ENCODE measurements at regions of chr7 and their contacts with region 1.

Region 1: DNA sequence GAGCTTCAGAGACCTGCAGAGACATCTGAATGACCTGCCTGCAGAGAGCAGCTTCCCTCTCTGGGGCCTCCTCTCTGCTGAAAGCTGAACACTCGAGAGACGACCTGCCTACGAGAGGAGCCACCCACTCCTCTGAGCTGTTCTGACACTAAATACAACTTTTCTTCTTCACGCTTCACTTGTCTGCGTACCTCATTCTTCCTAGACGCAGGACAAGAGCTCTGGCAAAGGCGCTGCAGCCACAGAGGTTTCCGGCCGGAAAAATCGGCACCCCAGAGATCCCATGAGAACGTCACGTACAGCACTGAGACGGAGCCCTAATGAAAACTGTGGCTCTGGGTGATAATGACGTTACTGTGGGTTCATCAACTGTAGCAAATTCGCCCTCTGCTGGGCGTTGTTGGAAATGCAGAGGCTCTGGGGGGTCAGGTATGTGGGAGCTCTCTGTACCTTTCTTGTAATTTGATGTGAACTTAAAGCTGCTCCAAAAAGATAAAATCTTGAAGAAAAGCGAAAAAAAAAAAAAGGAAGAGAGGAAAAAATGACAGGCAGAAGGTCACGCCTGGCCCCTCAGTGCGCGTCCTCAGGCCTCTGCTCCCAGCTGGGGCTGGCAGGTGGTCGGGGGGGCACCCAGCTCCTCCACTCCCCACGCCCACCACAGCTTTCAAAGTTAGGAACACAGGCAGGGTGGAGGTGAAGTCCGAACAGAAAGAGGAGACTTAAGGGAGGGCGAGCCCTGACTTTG is 120.7 kb downstream of the DYNC2I1 start:
- DNase-seq: peak; percentile 30
- H3K4me3 ChIP-seq: peak overlapping the region; percentile 41
- H3K27ac ChIP-seq: no peak overlapping the region
- H3K27me3 ChIP-seq: no peaks in the 10 kb centered on the region
- CTCF ChIP-seq: peak; percentile 86

Region 2: DNA sequence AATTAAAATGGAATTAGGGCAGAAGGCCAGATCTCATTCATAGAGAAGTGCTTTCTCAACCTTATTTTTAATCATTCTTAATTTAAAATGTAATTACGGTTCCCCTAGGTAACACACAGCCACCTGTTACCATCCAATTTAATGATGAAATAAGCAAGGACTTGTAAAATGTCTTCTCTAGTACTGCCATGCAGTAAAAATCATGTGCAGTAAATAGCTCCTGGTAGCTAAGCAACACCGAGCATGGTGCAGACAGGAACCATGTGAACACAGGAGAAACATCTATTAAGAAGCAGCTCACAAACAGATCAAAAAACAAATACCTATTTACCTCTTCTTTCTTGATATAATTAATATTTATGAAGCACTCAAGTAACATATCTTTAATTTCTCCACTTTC is 287.5 kb before region 1 on chr7:
- CTCF ChIA-PET with region 1: interaction called, 73 read pairs
- POLR2A ChIA-PET with region 1: no interaction called
- DNase-seq: no peak
- H3K4me3 ChIP-seq: no peak overlapping the region
- H3K27ac ChIP-seq: no peak overlapping the region
- H3K27me3 ChIP-seq: no peaks in the 10 kb centered on the region
- CTCF ChIP-seq: no peak

Region 3: DNA sequence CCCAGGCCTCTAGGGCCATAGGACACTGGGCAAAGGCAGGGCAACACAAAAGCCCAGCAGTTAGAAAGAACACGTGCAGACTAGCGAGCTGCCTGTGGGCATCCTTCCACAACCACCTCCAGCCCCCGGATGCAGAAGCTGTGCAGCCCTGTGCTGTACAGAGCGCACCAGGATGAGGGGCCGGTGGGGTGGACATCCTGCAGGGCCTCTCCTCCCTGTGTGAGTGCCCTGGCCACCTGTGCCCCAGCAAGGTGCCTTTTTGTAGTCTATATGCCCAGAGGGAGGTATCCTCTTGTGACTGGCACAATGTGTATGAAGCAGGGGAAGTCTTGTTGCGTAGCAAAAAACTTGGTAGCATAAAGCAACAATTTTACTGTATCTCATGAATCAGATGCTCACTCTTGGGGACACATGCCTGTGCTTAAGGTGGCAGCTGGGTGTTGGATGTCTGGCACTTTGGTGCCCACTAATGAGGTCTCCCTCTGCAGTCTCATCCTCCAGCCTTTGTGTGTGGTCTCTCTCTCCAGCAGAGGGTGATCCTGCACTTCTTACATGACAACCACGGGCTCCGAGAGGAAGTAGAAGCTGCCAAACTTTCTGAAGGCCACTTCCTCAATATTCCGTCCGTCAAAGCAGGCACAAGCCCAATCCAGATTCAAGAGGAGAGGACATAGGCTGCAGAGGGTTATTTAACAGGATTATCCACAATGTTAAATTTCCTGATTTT is 281.1 kb before region 1 on chr7:
- CTCF ChIA-PET with region 1: interaction called, 73 read pairs
- POLR2A ChIA-PET with region 1: no interaction called
- DNase-seq: peak; percentile 52
- H3K4me3 ChIP-seq: no peak overlapping the region
- H3K27ac ChIP-seq: no peak overlapping the region
- H3K27me3 ChIP-seq: no peaks in the 10 kb centered on the region
- CTCF ChIP-seq: peak; percentile 76

Region 4: GRCh38 chr7:159197066-159197975 is 220.3 kb after region 1 on chr7:
- CTCF ChIA-PET with region 1: no interaction called
- POLR2A ChIA-PET with region 1: no interaction called
- DNase-seq: no peak
- H3K4me3 ChIP-seq: no peak overlapping the region
- H3K27ac ChIP-seq: no peak overlapping the region
- H3K27me3 ChIP-seq: no peaks in the 10 kb centered on the region
- CTCF ChIP-seq: no peak